Left cardiac atrium (tissue), 4 donors: ENCODE measurements at regions of chr2 and their contacts with region 1.

Region 1: DNA sequence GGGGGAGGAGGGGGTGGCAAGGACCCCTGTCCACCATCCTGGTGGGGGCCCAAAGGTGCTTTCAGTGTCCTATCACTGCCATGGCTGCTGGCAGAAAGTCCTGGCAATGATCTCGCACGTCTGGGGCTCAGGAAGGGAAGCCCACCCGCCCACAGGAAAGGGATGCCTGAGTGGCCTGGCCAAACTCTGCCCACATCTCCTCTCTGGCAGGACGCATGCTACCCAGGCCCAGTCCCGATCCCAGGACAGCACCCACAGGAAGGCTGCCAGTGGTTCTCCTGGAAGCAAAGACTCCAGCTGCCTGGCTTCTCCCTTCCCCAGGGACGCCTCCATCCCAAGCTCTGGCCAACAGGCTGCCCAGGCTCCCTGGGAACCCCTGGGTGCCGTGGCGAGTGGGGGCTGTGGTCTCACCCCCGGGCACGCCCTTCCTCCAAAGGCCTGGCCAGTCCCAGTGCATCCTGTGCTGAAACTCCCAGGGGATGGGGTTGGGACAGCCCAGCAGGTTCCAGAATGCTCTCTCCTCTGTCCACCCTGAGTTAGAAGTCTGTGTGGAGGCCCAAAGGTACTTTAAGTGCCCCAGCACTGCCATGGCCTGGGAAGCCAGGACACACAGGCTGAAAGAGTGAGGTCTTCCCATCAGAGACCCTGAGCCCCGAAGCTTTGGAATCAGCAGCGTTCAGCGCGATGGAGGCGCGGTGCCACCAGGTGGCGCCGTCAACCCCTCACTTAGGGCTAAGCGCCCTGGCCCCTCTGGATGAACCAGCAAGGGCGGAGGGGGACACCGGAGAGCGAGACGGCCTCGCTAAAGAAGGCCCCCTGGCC is 29.8 kb upstream of the TAF1B start:
- DNase-seq: peak; percentile 78
- ATAC-seq: peak; percentile 84 to 87

Region 2: DNA sequence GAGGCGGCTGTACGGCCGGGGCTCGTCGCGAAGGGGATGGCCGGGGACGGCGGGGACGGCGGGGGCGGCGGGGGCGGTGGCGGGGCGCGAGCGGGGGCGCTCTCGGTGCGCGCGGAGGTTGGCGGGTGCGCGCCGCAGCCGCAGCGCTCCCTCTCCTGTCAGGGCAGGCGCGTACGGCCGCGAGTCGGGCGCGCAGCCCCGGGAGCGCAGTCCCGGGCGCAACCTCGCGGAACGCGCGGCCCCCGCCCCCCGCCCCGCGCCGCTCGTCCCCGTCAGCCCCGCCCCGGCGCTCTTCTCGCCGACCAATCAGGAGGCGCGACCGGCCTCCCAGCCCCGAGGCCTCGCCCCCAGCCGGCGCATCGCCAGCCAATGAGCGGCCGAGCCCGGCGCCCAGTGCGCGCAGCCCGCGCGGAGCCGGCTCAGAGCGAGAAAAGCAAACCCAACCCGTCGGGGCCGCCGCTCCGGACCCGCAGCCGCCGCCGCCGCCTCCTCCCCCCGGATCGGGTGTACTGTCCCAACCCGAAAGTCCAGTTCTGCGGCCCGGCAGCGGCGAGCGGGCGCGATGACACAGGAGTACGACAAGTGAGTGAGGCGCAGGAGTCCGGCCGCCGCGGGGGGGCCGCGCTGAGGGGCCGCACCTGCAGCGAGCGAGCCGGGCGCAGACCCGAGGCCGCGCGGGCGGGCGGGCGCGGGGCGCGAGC is 137.9 kb after region 1 on chr2 and contains the start of gene GRHL1:
- intact Hi-C with region 1: loop called in 1 of 2 experiments (anchors 10 kb)
- DNase-seq: peak; percentile 95
- ATAC-seq: peak; percentile 97 to 98
- total RNA-seq, gene GRHL1: 1.4 to 5.7 TPM